ENCODE measurements at regions of chr14 and their contacts with region 1.

Region 1: GRCh38 chr14:56241461-56241860 is 123.2 kb downstream of the PELI2 start:
- DNase-seq: no peak
- H3K4me3 ChIP-seq: no peak overlapping the region
- H3K27ac ChIP-seq: no peak overlapping the region
- H3K27me3 ChIP-seq: no peaks in the 10 kb centered on the region
- CTCF ChIP-seq: no peak

Region 2: DNA sequence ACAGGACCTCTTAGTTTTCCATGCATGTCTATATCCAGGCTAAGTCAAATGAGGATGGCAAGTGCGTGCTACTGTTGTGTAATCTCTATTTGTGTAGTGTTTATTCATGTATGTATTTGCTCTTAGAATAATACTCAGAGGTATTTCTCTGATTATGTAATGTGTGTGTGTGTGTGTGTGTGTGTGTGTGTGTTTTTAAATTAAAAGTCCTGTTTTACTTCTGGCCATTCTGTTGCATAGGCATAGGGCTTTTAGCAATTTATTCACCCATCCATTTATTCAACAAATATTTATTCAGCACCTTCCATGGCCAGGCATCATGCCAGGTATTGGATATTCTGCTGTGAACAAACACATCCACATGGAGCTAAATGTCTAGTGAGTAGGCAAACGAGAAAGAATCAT is 59.8 kb before region 1 on chr14:
- intact Hi-C with region 1: no loop called
- DNase-seq: no peak
- H3K4me3 ChIP-seq: no peak overlapping the region
- H3K27ac ChIP-seq: no peak overlapping the region
- H3K27me3 ChIP-seq: no peaks in the 10 kb centered on the region
- CTCF ChIP-seq: no peak

Region 3: DNA sequence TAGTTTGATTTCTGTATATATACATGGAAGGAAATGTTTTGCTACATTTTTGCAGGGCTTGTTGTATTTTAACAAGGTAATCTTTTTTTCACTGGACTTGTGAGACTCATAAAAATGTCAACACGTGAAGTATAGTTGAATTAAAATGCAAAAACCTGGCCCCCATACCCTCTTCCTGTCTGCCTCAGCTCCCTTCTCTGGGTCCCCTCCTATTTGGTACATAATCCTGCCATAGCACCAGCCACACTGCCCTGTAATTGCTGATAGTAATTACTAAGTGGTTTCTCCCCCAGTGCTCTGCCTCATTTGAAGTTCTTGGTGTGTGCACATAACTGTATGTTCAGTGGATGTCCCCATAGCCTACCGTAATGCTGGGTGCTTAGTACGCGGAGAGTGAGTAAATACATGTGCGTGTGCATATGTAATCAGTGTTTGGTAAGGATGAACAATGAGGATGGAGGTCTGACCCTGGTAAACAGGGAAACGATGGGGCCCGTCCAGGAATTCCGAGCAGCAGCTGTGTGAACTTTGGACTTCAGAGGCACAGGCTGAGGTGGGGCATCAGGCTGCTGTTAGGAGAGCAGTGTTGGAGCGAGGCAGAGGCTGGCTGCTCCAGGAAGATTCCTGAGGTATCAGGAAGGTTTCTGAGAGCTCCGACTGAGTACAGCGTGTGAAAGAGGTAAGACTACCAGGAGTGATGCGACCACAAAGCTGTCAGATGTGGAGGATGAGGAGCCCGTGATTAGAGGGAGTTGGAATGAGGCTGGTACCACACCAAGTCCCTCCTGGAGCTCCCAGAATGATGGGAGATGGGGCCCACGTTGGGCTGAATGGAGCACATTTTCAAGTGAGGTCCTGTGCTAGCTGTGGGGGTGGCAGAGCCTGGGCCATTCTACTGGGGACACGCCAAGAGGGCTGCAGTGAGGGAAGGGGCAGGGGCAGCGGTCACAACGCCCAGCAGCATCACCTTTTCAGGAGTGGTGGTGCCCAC is 16.5 kb before region 1 on chr14:
- intact Hi-C with region 1: loop called in 1 of 2 experiments (anchors 1 kb)
- DNase-seq: no peak
- H3K4me3 ChIP-seq: no peak overlapping the region
- H3K27ac ChIP-seq: no peak overlapping the region
- H3K27me3 ChIP-seq: no peaks in the 10 kb centered on the region
- CTCF ChIP-seq: no peak

Region 4: DNA sequence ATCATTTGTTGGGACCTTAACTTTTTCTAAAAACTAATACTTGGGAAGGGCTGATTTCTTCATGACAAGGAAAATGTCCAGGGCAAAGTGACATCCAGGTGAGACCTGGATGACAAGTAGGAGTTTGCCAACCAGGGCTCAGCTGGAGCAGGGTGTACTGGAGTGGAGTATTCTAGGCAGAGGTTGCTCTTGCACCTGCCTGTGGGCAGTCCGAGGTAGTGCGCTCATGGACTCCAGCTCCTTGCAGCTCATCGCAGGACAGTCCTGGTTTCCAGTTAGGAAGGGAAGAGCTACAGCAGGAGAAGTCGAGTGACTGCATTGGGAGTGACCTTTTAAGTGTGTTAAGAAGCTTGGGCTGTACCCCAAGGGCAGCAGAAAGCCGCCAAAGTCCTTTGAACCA is 52.7 kb after region 1 on chr14:
- intact Hi-C with region 1: no loop called
- DNase-seq: no peak
- H3K4me3 ChIP-seq: no peak overlapping the region
- H3K27ac ChIP-seq: no peak overlapping the region
- H3K27me3 ChIP-seq: no peaks in the 10 kb centered on the region
- CTCF ChIP-seq: peak in 1 of 56 donors; percentile 11

Measured in dorsolateral prefrontal cortex (tissue), 120 donors.